ENCODE measurements at regions of chr3 and their contacts with region 1.

Region 1: GRCh38 chr3:150737874-150738713 is 24.9 kb downstream of the SIAH2 start:
- DNase-seq: peak; percentile 81
- H3K4me3 Mint-ChIP-seq: peak overlapping the region; percentile 41
- H3K27ac Mint-ChIP-seq: peak overlapping the region; percentile 99
- H3K4me1 Mint-ChIP-seq: peaks cover 77% of the 10 kb centered on the region
- H3K27me3 Mint-ChIP-seq: no peaks in the 10 kb centered on the region

Region 2: DNA sequence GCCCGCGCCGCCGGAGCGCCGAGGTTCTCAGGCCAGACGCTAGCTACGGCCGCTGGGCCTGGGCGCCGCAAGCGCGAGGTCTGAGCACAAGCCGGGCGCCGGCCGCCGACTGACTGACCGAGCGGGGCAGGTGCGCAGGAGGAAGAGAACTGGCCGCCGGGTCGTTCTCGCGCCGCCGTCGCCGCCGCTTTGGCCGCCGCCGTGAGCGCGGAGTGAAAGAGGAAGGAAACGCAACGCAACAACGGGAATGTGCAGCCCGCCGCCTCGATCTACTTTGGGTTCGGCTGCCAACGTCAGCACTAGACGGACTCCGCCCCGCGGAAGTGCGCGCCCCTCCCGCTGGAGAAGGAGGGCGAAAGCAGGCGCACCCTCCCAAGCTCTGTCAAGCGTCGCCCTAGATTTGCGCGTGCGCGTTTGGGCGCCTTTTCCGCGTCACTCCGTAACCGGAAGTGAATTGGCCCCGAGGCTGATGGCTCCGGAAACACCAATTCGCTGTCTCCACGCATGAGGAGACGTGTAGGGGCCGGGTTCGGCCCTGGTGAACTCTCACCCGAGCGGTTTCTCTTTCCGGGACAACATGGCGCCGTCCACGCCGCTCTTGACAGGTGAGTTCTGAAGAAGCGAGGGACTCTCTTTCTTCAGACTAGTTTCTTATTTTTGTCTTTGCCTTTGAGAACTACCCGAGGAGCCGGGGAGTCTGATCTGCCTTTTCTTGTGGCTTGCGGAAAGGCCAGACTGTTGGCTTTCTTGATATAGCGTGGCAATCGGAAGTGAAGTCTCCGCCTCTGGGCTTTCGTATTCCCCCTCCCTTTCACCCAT is 191.7 kb before region 1 on chr3 and contains the starts of genes EIF2A and SERP1:
- CTCF ChIA-PET with region 1: no interaction called
- intact Hi-C with region 1: loop called (anchors 1 kb)
- DNase-seq: peak; percentile 99
- H3K4me3 Mint-ChIP-seq: peak within 1 kb of the TSS; percentile 97
- H3K27ac Mint-ChIP-seq: peak within 1 kb of the TSS; percentile 95
- H3K4me1 Mint-ChIP-seq: peaks cover 69% of the 10 kb centered on the region
- H3K27me3 Mint-ChIP-seq: no peaks in the 10 kb centered on the region
- total RNA-seq, gene EIF2A: 133 to 135 TPM
- total RNA-seq, gene SERP1: 95.9 to 105 TPM

Region 3: GRCh38 chr3:150610790-150611189 is 127.3 kb before region 1 on chr3:
- CTCF ChIA-PET with region 1: interaction called, 3 read pairs
- intact Hi-C with region 1: loop called (anchors 1 kb)
- DNase-seq: no peak
- H3K4me3 Mint-ChIP-seq: no peak overlapping the region
- H3K27ac Mint-ChIP-seq: no peak overlapping the region
- H3K4me1 Mint-ChIP-seq: peaks cover 72% of the 10 kb centered on the region
- H3K27me3 Mint-ChIP-seq: no peaks in the 10 kb centered on the region

Region 4: DNA sequence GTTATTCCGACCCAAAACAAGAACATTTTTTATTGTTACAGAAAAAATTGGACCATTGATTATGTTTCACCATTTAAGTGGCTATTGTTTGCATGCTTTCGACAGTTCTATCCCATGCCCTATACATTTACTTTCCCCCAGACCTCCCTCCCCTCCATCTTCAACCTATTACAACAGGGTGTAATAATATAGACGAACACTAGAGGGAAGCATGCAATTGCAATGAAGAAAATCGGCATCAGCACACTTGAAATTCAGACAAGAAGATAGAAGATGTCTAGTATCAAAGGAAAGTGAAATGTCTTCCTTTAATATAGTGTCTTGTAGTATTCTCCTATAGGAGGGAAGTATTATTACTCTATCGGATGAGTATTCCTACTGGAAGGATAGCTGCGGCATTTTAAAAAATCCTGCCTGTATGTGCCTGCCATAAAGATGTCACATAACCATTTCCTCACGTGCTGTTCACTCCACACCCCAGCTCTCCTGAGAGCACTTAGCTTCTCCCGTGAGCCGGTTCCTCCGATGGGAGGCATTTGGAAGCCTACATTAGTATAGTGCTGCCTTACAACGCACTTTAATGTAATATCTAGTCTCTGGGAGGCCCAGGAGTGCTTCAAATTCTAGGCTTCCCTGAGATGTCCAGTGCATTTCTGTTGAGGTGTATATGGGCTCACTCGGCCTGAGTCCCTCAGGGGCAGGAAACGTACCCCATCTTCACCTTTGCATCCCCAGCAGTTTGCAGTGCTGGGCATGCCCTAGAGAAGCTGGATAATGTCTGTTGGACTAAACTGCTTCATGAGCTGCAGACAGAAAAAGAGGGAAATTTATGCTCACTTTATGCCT is 16.6 kb before region 1 on chr3:
- CTCF ChIA-PET with region 1: interaction called, 12 read pairs
- intact Hi-C with region 1: loop called (anchors 1 kb)
- DNase-seq: no peak
- H3K4me3 Mint-ChIP-seq: no peak overlapping the region
- H3K27ac Mint-ChIP-seq: no peak overlapping the region
- H3K4me1 Mint-ChIP-seq: peaks cover 28% of the 10 kb centered on the region
- H3K27me3 Mint-ChIP-seq: no peaks in the 10 kb centered on the region

Region 5: DNA sequence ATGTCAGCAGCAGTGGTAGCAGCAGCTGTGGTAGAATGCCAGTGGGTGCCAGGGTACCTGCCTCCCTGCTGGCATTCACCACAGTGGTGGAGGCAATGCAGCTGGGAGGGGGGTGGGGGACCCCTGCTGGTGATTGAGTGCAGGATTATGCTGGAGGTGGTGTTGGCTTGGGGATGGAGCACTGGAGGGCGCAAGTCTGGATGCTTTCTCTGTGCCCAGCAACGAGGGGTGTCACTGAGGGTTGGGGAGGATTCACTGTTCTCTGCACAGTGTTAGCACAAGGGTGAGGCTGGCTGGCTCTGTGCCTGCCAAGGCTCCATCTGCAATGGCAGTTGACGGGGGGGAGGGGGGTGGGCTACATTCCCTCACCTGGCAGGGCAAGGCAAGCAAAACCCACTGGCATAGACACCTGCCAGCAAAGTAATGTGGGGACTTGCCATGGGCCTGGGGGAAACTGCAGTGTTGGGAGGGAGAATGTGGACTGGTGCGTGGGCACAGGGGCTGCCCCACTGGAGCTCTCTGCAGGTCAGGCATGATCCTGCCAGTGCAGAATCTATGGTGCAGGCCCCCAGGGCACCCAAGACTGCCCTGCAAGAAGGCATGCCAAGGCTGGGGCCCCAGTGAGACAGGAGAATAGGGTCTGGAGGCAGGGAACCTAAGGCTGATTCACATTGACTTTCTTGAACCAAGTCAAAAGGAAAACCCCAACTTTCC is 102.9 kb after region 1 on chr3:
- CTCF ChIA-PET with region 1: no interaction called
- intact Hi-C with region 1: no loop called
- DNase-seq: no peak
- H3K4me3 Mint-ChIP-seq: no peak overlapping the region
- H3K27ac Mint-ChIP-seq: no peak overlapping the region
- H3K4me1 Mint-ChIP-seq: no peaks in the 10 kb centered on the region
- H3K27me3 Mint-ChIP-seq: peaks cover 9% of the 10 kb centered on the region

Region 6: GRCh38 chr3:151086484-151087456 is 348.7 kb after region 1 on chr3:
- CTCF ChIA-PET with region 1: no interaction called
- intact Hi-C with region 1: loop called (anchors 5 kb)
- DNase-seq: peak; percentile 87
- H3K4me3 Mint-ChIP-seq: peak overlapping the region; percentile 82
- H3K27ac Mint-ChIP-seq: no peak overlapping the region
- H3K4me1 Mint-ChIP-seq: peaks cover 9% of the 10 kb centered on the region
- H3K27me3 Mint-ChIP-seq: peaks cover 46% of the 10 kb centered on the region

Region 7: GRCh38 chr3:151276687-151277042 is 538.6 kb after region 1 on chr3:
- CTCF ChIA-PET with region 1: no interaction called
- intact Hi-C with region 1: loop called (anchors 2 kb)
- DNase-seq: peak; percentile 77
- H3K4me3 Mint-ChIP-seq: peak overlapping the region; percentile 55
- H3K27ac Mint-ChIP-seq: peak overlapping the region; percentile 85
- H3K4me1 Mint-ChIP-seq: peaks cover 39% of the 10 kb centered on the region
- H3K27me3 Mint-ChIP-seq: no peaks in the 10 kb centered on the region

Measured in activated naive CD4-positive, alpha-beta T cell treated with anti-CD3 and anti-CD28 coated beads for 36 hours (primary cell).